SK-N-SH (cell line): ENCODE measurements at regions of chr11 and their contacts with region 1.

Region 1: GRCh38 chr11:116170526-116171122 is 602.2 kb downstream of the BUD13 start:
- DNase-seq: peak; percentile 52
- H3K4me3 ChIP-seq: no peak overlapping the region
- H3K27ac ChIP-seq: no peak overlapping the region
- H3K4me1 ChIP-seq: peaks cover 0 to 16% of the 10 kb centered on the region in 2 experiments; a peak in 1 of 4 replicates
- H3K27me3 ChIP-seq: no peaks in the 10 kb centered on the region
- CTCF ChIP-seq: peak; percentile 44
- EP300 ChIP-seq: no peak
- RAD21 ChIP-seq: peak; percentile 57

Region 2: GRCh38 chr11:116224154-116224888 is 53.7 kb after region 1 on chr11:
- CTCF ChIA-PET with region 1: interaction called, 14 read pairs
- POLR2A ChIA-PET with region 1: no interaction called
- DNase-seq: peak; percentile 63
- H3K4me3 ChIP-seq: peak overlapping the region in 1 of 2 experiments; percentile 31; a peak in 1 of 4 replicates
- H3K27ac ChIP-seq: peak overlapping the region in 1 of 2 experiments; percentile 84; a peak in 2 of 4 replicates
- H3K4me1 ChIP-seq: peaks cover 0 to 40% of the 10 kb centered on the region in 2 experiments; a peak in 1 of 4 replicates
- H3K27me3 ChIP-seq: no peaks in the 10 kb centered on the region
- CTCF ChIP-seq: peak; percentile 79
- EP300 ChIP-seq: no peak
- RAD21 ChIP-seq: peak; percentile 65

Region 3: GRCh38 chr11:116240710-116241109 is 70.1 kb after region 1 on chr11:
- CTCF ChIA-PET with region 1: no interaction called
- POLR2A ChIA-PET with region 1: no interaction called
- DNase-seq: no peak
- H3K4me3 ChIP-seq: no peak overlapping the region
- H3K27ac ChIP-seq: no peak overlapping the region
- H3K4me1 ChIP-seq: peaks cover 0 to 4% of the 10 kb centered on the region in 2 experiments; a peak in 1 of 4 replicates
- H3K27me3 ChIP-seq: no peaks in the 10 kb centered on the region
- CTCF ChIP-seq: no peak
- EP300 ChIP-seq: no peak
- RAD21 ChIP-seq: no peak